ENCODE measurements at regions of chrX and their contacts with region 1.

Region 1: GRCh38 chrX:69210581-69210980 is 45.3 kb upstream of the PJA1 start:
- DNase-seq: no peak
- H3K4me3 ChIP-seq: no peak overlapping the region
- H3K27ac ChIP-seq: no peak overlapping the region
- H3K4me1 ChIP-seq: no peaks in the 10 kb centered on the region; a peak in 1 of 7 replicates
- H3K27me3 ChIP-seq: no peaks in the 10 kb centered on the region; a peak in 1 of 7 replicates
- CTCF ChIP-seq: no peak
- EP300 ChIP-seq: no peak
- POLR2A ChIP-seq: no peak
- RAD21 ChIP-seq: no peak

Region 2: DNA sequence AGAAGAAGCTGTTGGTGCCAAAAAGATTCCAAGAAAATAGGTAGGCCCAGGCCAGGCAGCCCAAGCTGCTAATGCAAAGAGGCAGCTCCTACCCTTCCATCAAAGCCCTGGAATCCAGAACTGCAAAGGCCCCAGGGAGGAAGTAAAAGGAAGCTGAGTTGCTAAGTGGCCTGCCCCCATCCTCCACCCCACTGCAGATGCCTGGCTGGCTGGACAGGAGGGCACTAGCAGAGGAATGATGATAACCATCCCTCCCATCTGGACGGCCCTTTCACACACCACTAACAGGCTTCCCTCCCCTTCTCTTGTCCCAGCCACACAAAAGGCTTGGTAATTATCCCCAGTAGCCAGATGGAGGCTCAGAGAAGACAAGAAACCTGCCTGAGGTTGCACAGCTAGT is 12.9 kb before region 1 on chrX:
- CTCF ChIA-PET with region 1: interaction called, 10 read pairs
- POLR2A ChIA-PET with region 1: no interaction called
- DNase-seq: no peak
- H3K4me3 ChIP-seq: no peak overlapping the region
- H3K27ac ChIP-seq: no peak overlapping the region
- H3K4me1 ChIP-seq: no peaks in the 10 kb centered on the region
- H3K27me3 ChIP-seq: no peaks in the 10 kb centered on the region
- CTCF ChIP-seq: no peak
- EP300 ChIP-seq: no peak
- POLR2A ChIP-seq: no peak
- RAD21 ChIP-seq: no peak